Endothelial cell of umbilical vein (primary cell): ENCODE measurements at regions of chr1 and their contacts with region 1.

Region 1: GRCh38 chr1:24391882-24392603 is 21.5 kb downstream of the STPG1 start:
- DNase-seq: peak; percentile 75
- H3K4me3 ChIP-seq: peak overlapping the region in 1 of 3 experiments; percentile 32
- H3K27ac ChIP-seq: peak overlapping the region; percentile 32
- H3K4me1 ChIP-seq: peaks cover 40% of the 10 kb centered on the region
- H3K27me3 ChIP-seq: no peaks in the 10 kb centered on the region
- CTCF ChIP-seq: peak; percentile 91 to 92
- POLR2A ChIP-seq: no peak

Region 2: DNA sequence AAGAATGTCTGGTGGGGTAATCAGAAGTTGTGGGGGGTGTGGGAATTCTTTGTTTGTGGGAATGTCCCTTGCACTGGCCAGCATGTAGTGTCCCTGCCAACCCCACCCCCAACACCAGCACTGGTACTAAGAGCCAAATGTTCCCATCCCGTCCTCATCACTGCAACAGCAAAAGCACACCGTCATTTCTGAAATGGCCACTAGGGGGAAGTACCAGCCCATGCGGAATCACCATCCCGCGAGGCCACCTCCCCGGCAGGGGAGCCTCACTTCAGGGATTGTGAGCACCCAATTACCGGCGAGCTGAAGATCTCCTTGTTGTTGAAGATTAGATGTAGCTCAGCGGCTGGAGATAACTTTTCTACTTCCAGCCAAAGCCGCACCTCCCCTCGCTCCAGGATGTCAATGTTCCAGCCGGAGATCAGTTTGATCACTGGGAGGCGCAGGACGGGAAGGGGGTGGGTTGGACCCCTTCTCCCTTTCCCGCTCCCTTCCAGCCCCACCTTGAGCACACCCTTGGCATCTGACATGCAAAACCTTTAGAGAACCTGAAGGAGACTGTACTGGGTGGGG is 321.1 kb before region 1 on chr1:
- CTCF ChIA-PET with region 1: interaction called, 15 read pairs
- POLR2A ChIA-PET with region 1: no interaction called
- dilution Hi-C with region 1: no loop called
- intact Hi-C with region 1: loop called (anchors 1 kb)
- DNase-seq: peak; percentile 77
- H3K4me3 ChIP-seq: no peak overlapping the region
- H3K27ac ChIP-seq: no peak overlapping the region
- H3K4me1 ChIP-seq: no peaks in the 10 kb centered on the region
- H3K27me3 ChIP-seq: peaks cover 0 to 3% of the 10 kb centered on the region in 2 experiments
- CTCF ChIP-seq: peak; percentile 85 to 93
- POLR2A ChIP-seq: no peak

Region 3: DNA sequence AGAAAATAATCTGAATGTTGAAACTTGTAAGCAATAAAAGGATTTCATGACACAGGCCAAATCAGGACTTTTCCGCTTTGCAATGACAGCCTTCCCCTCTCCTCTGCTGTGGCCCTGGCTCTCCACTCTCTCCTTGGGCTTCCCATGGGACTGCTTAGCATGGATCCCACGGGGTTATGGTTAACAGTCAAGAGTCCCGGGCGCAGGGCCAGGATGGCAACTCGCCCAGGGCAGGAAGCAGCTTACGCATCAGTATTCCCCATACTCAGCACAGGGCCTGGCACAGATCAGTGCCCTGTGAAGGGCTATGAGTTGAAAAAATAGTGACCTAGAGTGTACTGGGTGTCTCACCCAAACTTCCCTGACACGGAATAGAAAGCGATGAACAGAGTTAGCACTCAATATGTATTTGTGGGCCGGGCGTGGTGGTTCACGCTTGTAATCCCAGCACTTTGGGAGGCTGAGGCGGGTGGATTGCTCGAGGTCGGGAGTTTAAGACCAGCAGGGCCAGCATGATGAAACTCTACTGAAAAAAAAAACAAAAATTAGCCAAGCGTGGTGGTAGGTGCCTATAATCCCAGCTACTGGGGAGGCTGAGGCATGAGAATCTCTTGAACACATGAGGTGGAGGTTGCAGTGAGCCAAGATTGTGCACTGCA is 102.0 kb before region 1 on chr1:
- CTCF ChIA-PET with region 1: interaction called, 9 read pairs
- POLR2A ChIA-PET with region 1: no interaction called
- dilution Hi-C with region 1: no loop called
- intact Hi-C with region 1: loop called (anchors 2 kb)
- DNase-seq: peak; percentile 93
- H3K4me3 ChIP-seq: no peak overlapping the region
- H3K27ac ChIP-seq: no peak overlapping the region
- H3K4me1 ChIP-seq: peaks cover 18% of the 10 kb centered on the region
- H3K27me3 ChIP-seq: no peaks in the 10 kb centered on the region
- CTCF ChIP-seq: no peak
- POLR2A ChIP-seq: no peak

Region 4: DNA sequence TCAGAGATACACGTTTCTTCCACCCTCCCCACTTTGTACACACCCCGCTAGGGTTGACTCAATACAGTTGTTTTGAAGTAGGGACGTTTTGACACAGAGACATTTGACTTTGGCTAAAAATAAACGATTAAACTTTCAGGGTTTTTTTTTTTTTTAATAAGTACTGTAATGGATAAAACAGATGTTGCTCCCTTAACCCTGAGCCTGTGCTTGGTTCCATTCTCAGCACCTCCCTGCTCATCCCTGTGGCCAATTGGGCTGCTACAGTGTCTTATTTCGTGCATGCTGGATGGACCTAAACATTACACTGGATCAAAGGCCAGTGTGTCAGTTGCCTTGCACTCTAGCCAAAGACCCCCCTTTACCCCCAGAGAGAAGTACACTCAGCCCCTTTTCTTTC is 56.0 kb before region 1 on chr1:
- CTCF ChIA-PET with region 1: no interaction called
- POLR2A ChIA-PET with region 1: no interaction called
- dilution Hi-C with region 1: no loop called
- intact Hi-C with region 1: no loop called
- DNase-seq: no peak
- H3K4me3 ChIP-seq: no peak overlapping the region
- H3K27ac ChIP-seq: no peak overlapping the region
- H3K4me1 ChIP-seq: no peaks in the 10 kb centered on the region
- H3K27me3 ChIP-seq: peaks cover 2 to 6% of the 10 kb centered on the region in 2 experiments
- CTCF ChIP-seq: no peak
- POLR2A ChIP-seq: no peak

Region 5: DNA sequence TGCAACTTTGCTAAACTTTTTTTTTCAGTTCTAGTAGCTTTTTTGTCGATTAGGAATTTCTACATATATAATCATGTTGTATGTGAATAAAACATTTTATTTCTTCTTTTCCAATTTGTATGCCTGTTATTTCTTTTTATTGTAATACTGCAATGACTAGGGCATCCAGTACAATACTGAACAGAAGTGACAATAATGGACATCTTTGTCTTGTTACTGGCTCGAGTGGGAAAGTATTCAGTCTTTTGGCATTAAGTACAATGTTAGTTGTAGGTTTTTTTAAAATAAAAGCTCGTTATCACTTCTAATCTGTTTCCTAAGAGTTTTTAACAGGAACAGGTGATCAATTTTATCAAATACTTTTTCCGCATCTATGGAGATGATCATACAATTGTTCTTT is 11.8 kb after region 1 on chr1:
- CTCF ChIA-PET with region 1: interaction called, 51 read pairs
- POLR2A ChIA-PET with region 1: no interaction called
- dilution Hi-C with region 1: no loop called
- intact Hi-C with region 1: no loop called
- DNase-seq: no peak
- H3K4me3 ChIP-seq: no peak overlapping the region
- H3K27ac ChIP-seq: no peak overlapping the region
- H3K4me1 ChIP-seq: no peaks in the 10 kb centered on the region
- H3K27me3 ChIP-seq: no peaks in the 10 kb centered on the region
- CTCF ChIP-seq: no peak
- POLR2A ChIP-seq: no peak

Region 6: GRCh38 chr1:24526940-24527542 is 135.0 kb after region 1 on chr1:
- CTCF ChIA-PET with region 1: interaction called, 32 read pairs
- POLR2A ChIA-PET with region 1: no interaction called
- dilution Hi-C with region 1: no loop called
- intact Hi-C with region 1: loop called (anchors 2 kb)
- DNase-seq: peak; percentile 23
- H3K4me3 ChIP-seq: no peak overlapping the region
- H3K27ac ChIP-seq: no peak overlapping the region
- H3K4me1 ChIP-seq: no peaks in the 10 kb centered on the region
- H3K27me3 ChIP-seq: no peaks in the 10 kb centered on the region
- CTCF ChIP-seq: peak; percentile 48 to 53
- POLR2A ChIP-seq: no peak